Cardiac septum (tissue), 1 donor: ENCODE measurements at regions of chr1 and their contacts with region 1.

Region 1: GRCh38 chr1:10788592-10789006 is 7.8 kb downstream of the CASZ1 start:
- DNase-seq: peak; percentile 89

Region 2: DNA sequence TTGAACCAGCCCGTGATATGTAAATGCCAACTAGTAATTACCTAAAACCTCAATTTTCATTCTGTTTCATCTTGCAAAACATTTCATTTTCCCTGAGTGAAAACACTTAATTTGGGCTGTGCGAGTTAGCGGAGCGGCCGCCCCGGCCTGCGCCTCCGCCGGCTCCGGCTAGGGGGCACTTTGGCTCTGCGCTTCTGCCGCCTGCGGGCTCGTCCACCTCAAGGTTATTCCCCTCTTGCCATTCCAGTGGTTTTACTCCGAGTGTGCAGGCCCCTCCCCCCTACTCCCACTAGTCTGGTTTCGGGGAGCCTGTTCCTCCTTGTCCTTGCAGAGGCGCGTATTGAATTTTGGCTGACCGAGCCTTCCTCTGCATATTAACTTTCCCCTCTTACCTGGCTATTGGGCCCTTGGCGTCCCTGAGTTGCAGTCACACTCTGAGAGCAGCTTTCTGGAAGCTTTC is 258.3 kb before region 1 on chr1:
- intact Hi-C with region 1: loop called (anchors 5 kb)
- DNase-seq: no peak

Region 3: DNA sequence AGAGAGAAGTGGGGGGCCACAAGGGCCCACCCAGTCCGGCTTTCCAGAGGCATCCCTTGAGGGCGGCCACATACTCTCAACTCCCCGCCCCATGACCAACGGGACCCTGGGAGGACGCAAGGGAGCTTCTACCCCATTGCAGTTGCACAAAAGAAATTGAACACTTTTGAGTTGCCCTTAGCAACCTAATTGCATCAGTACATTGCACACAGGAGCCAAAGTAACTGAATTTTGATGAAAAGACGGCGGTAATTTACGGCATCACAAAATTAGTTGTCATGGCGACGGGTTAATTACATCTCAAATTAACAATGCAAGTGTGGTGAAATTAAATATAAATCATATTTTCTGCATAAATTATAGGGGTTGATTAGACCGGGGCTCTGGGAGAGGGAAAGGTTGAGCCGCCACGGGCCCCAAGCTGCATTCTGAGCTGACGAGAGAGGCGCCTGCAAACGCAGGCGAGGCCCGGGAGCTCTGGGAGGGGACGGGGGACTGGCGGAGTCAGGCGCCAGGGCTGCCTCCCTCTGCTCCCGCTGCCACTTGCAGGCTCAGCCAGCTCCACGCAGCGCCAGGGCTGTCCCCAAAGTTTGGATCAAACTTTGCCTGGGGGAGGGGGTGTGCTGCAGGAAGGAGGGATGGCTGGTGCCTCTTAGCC is 53.5 kb before region 1 on chr1:
- intact Hi-C with region 1: loop called (anchors 5 kb)
- DNase-seq: no peak